ENCODE measurements at regions of chr20 and their contacts with region 1.

Region 1: GRCh38 chr20:7841971-7842310 is 98.3 kb downstream of the HAO1 start:
- DNase-seq: no peak
- H3K4me3 ChIP-seq: no peak overlapping the region
- H3K27ac ChIP-seq: no peak overlapping the region
- H3K4me1 ChIP-seq: no peaks in the 10 kb centered on the region
- H3K27me3 ChIP-seq: no peaks in the 10 kb centered on the region
- CTCF ChIP-seq: no peak

Region 2: GRCh38 chr20:7790189-7790588 is 51.8 kb before region 1 on chr20:
- CTCF ChIA-PET with region 1: no interaction called
- POLR2A ChIA-PET with region 1: no interaction called
- intact Hi-C with region 1: no loop called
- DNase-seq: no peak
- H3K4me3 ChIP-seq: no peak overlapping the region
- H3K27ac ChIP-seq: no peak overlapping the region
- H3K4me1 ChIP-seq: no peaks in the 10 kb centered on the region
- H3K27me3 ChIP-seq: no peaks in the 10 kb centered on the region
- CTCF ChIP-seq: no peak

Region 3: DNA sequence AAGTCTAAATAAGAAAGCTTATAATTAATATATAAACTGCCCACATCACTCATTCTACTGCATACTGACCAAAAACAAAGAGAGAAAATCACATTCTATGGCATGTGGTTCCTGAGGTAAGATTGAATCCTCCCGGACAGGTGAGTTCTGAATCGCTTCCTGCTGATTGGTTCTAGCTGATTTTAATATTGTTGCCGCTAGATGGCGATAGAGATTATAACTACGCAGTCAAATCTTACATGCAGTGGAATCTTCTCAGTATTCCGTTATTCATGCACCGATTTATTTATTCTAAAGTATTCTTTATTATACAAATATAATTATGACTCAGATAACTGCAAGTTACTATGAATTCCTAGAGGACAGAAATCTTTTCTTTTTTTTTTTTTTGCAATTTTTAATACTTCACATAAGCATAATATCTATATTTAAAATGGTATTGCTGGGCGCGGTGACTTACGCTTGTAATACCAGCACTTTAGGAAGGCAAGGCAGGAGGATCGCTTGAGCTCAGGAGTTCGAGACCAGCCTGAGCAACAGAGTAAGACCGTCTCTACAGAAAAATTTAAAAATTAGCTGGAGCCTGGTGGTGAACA is 201.8 kb after region 1 on chr20:
- CTCF ChIA-PET with region 1: interaction called, 11 read pairs
- POLR2A ChIA-PET with region 1: no interaction called
- intact Hi-C with region 1: no loop called
- DNase-seq: peak; percentile 12 to 44
- H3K4me3 ChIP-seq: no peak overlapping the region
- H3K27ac ChIP-seq: no peak overlapping the region
- H3K4me1 ChIP-seq: peaks cover 10% of the 10 kb centered on the region; the same call in 1 of the 2 replicates
- H3K27me3 ChIP-seq: peaks cover 3% of the 10 kb centered on the region; the same call in 1 of the 2 replicates
- CTCF ChIP-seq: peak; percentile 87